Transverse colon (tissue), 4 donors: ENCODE measurements at regions of chr1 and their contacts with region 1.

Region 1: DNA sequence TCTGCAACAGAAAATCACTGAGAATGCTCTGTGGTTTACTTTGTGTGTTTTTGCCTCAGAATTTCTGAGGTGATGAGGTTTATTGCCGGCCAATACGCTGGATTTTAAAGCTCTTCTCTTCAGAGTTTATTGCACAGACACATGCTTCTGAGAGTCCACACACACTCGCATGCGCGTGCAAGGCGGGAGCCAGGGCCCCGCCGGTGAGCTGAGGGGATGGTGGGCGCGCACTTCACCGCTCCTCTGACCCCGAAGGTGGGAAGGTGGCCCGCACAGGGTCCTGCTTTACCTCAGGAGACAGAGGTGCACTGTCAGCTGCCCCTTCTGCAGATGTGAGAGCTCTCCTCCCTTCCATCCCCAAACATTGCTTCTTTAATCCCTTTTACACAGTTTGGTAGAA is 158.4 kb upstream of the MAGI3 start:
- DNase-seq: no peak
- H3K4me3 ChIP-seq: no peak overlapping the region
- H3K27ac ChIP-seq: no peak overlapping the region
- H3K4me1 ChIP-seq: peaks cover 0 to 6% (median 0%) of the 10 kb centered on the region in 4 donors
- H3K27me3 ChIP-seq: no peaks in the 10 kb centered on the region
- CTCF ChIP-seq: no peak
- EP300 ChIP-seq: no peak
- POLR2A ChIP-seq: no peak

Region 2: GRCh38 chr1:113253187-113253586 is 21.3 kb after region 1 on chr1:
- in situ Hi-C with region 1: no loop called
- intact Hi-C with region 1: loop called (anchors 2 kb)
- DNase-seq: peak; percentile 58
- H3K4me3 ChIP-seq: no peak overlapping the region
- H3K27ac ChIP-seq: peak overlapping the region; percentile 79 to 86 (median 82)
- H3K4me1 ChIP-seq: peaks cover 0 to 46% (median 21%) of the 10 kb centered on the region in 4 donors
- H3K27me3 ChIP-seq: no peaks in the 10 kb centered on the region
- CTCF ChIP-seq: no peak
- EP300 ChIP-seq: peak; percentile 74
- POLR2A ChIP-seq: peak; percentile 39

Region 3: GRCh38 chr1:113265196-113265595 is 33.3 kb after region 1 on chr1:
- in situ Hi-C with region 1: no loop called
- intact Hi-C with region 1: no loop called
- DNase-seq: no peak
- H3K4me3 ChIP-seq: no peak overlapping the region
- H3K27ac ChIP-seq: no peak overlapping the region
- H3K4me1 ChIP-seq: peaks cover 0 to under 1% (median 0%) of the 10 kb centered on the region in 4 donors
- H3K27me3 ChIP-seq: no peaks in the 10 kb centered on the region
- CTCF ChIP-seq: no peak
- EP300 ChIP-seq: no peak
- POLR2A ChIP-seq: no peak